ENCODE measurements at regions of chr11 and their contacts with region 1.

Region 1: GRCh38 chr11:6234387-6235107 is at the start of gene FHIP1B:
- DNase-seq: peak; percentile 95 to 100 (median 100)
- ATAC-seq: peak; percentile 95
- H3K4me3 ChIP-seq: peak within 1 kb of the TSS; percentile 96
- H3K4me3 Mint-ChIP-seq: peak within 1 kb of the TSS; percentile 90 to 100 (median 98)
- H3K27ac ChIP-seq: peak within 1 kb of the TSS; percentile 81
- H3K27ac Mint-ChIP-seq: peak within 1 kb of the TSS; percentile 87 to 100 (median 97)
- H3K4me1 ChIP-seq: peaks cover 14 to 19% of the 10 kb centered on the region in 2 donors
- H3K4me1 Mint-ChIP-seq: peaks cover 36 to 55% (median 50%) of the 10 kb centered on the region in 7 donors
- H3K27me3 ChIP-seq: no peaks in the 10 kb centered on the region
- H3K27me3 Mint-ChIP-seq: no peaks in the 10 kb centered on the region
- total RNA-seq, gene FHIP1B: 26.8 to 52.4 (median 44.3) TPM

Region 2: GRCh38 chr11:4393209-4393857 is 1841.2 kb before region 1 on chr11 and contains the start of gene TRIM21:
- CTCF ChIA-PET with region 1: no interaction called
- POLR2A ChIA-PET with region 1: no interaction called
- intact Hi-C with region 1: loop called (anchors 5 to 10 kb)
- DNase-seq: peak; percentile 62 to 92 (median 87)
- ATAC-seq: peak; percentile 100
- H3K4me3 ChIP-seq: peak within 1 kb of the TSS; percentile 87
- H3K4me3 Mint-ChIP-seq: peak within 1 kb of the TSS; percentile 88 to 94 (median 90)
- H3K27ac ChIP-seq: peak within 1 kb of the TSS; percentile 89
- H3K27ac Mint-ChIP-seq: peak within 1 kb of the TSS; percentile 68 to 96 (median 93)
- H3K4me1 ChIP-seq: peaks cover 8 to 14% of the 10 kb centered on the region in 2 donors
- H3K4me1 Mint-ChIP-seq: peaks cover 47 to 61% (median 58%) of the 10 kb centered on the region in 7 donors
- H3K27me3 ChIP-seq: no peaks in the 10 kb centered on the region
- H3K27me3 Mint-ChIP-seq: peaks cover 0 to 8% (median 5%) of the 10 kb centered on the region in 5 donors
- total RNA-seq, gene TRIM21: 17.5 to 78.9 (median 29.7) TPM

Region 3: GRCh38 chr11:6196396-6196795 is 38.2 kb before region 1 on chr11:
- CTCF ChIA-PET with region 1: no interaction called
- POLR2A ChIA-PET with region 1: no interaction called
- intact Hi-C with region 1: loop called in 1 of 2 experiments (anchors 1 kb)
- DNase-seq: no peak
- ATAC-seq: no peak
- H3K4me3 ChIP-seq: no peak overlapping the region
- H3K4me3 Mint-ChIP-seq: no peak overlapping the region
- H3K27ac ChIP-seq: no peak overlapping the region
- H3K27ac Mint-ChIP-seq: no peak overlapping the region
- H3K4me1 ChIP-seq: peaks cover 0 to 8% of the 10 kb centered on the region in 2 donors
- H3K4me1 Mint-ChIP-seq: peaks cover 0 to 18% (median 6%) of the 10 kb centered on the region in 7 donors
- H3K27me3 ChIP-seq: no peaks in the 10 kb centered on the region
- H3K27me3 Mint-ChIP-seq: peaks cover 0 to 8% (median 0%) of the 10 kb centered on the region in 5 donors

Region 4: GRCh38 chr11:6473481-6474422 is 239.2 kb after region 1 on chr11 and contains the start of gene TRIM3:
- CTCF ChIA-PET with region 1: no interaction called
- POLR2A ChIA-PET with region 1: no interaction called
- intact Hi-C with region 1: loop called in 1 of 2 experiments (anchors 2 kb)
- DNase-seq: peak; percentile 16 to 68 (median 44)
- ATAC-seq: peak; percentile 86
- H3K4me3 ChIP-seq: peak within 1 kb of the TSS; percentile 56
- H3K4me3 Mint-ChIP-seq: peak within 1 kb of the TSS; percentile 78 to 90 (median 86)
- H3K27ac ChIP-seq: peak within 1 kb of the TSS; percentile 71
- H3K27ac Mint-ChIP-seq: peak within 1 kb of the TSS; percentile 40 to 90 (median 88)
- H3K4me1 ChIP-seq: peaks cover 7 to 11% of the 10 kb centered on the region in 2 donors
- H3K4me1 Mint-ChIP-seq: peaks cover 12 to 31% (median 20%) of the 10 kb centered on the region in 7 donors
- H3K27me3 ChIP-seq: no peaks in the 10 kb centered on the region
- H3K27me3 Mint-ChIP-seq: peaks cover 0 to 10% (median 0%) of the 10 kb centered on the region in 5 donors
- total RNA-seq, gene TRIM3: 8.1 to 20.7 (median 17.2) TPM

Region 5: DNA sequence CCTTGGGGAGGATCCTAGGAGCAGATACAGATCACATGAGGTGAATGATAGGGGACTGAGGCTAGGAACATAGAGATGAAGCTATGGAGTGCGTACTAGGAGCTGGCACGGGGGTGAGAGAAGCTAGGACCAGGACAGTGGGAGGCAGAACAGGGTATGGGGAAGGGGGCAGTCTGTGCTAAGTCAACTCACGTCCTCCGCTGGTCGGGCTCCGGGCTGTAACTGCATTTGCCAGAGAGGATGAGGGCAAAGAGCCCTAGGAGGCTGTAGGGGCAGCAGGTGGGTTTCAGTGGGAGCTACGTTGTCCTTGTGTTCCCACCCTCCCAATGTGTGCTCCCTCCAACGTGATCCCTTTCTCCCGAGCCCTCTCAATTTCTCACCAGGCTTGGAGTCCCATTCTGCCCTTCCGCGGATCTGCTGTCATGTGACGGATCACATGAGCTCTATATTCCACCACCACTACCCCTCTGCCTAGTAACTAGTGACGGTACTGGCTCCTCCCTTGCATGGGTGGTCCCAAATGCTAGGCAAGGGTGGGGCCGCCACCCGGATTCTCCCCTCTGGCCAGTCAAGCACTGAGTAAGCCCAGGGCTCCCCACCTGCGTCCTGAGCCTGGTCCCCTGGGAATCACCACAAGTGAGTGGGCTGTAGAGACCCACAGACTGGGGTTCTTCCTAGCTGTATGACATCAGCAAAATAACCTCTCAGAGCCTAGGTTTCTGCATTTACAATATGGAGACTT is 384.6 kb after region 1 on chr11 and contains the start of gene TPP1:
- CTCF ChIA-PET with region 1: no interaction called
- POLR2A ChIA-PET with region 1: no interaction called
- intact Hi-C with region 1: loop called (anchors 1 to 2 kb)
- DNase-seq: peak; percentile 76 to 94 (median 90)
- ATAC-seq: peak; percentile 96
- H3K4me3 ChIP-seq: peak within 1 kb of the TSS; percentile 91
- H3K4me3 Mint-ChIP-seq: no peak within 1 kb of the TSS
- H3K27ac ChIP-seq: peak within 1 kb of the TSS; percentile 87
- H3K27ac Mint-ChIP-seq: no peak within 1 kb of the TSS
- H3K4me1 ChIP-seq: peaks cover 6 to 22% of the 10 kb centered on the region in 2 donors
- H3K4me1 Mint-ChIP-seq: peaks cover 7 to 17% (median 9%) of the 10 kb centered on the region in 7 donors
- H3K27me3 ChIP-seq: no peaks in the 10 kb centered on the region
- H3K27me3 Mint-ChIP-seq: no peaks in the 10 kb centered on the region
- total RNA-seq, gene TPP1: 49.9 to 160 (median 134) TPM

Region 6: DNA sequence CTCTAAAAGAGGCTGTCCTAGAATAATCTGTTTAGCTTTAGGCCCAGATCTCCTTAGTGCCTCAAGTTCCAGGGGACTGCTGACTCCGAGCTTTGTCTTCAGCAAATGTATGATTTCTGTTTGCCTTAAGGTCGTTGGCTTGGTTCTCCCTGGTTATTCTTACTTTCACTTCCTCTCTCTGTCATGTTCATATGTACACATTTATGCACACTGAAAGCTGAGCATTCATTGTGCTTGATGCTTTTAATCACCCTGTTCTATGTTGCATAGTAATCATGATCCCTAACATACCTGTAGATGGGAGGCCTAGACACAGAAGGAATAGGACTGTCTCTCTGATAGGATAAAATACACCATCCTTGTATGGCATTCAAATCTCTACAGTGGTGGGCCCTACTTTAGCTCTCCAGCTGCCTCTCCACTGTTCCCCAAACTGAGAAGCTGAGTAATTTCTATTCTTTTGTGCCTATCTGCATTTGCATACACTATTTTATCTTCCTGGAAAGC is 1286.5 kb after region 1 on chr11:
- CTCF ChIA-PET with region 1: no interaction called
- POLR2A ChIA-PET with region 1: no interaction called
- intact Hi-C with region 1: loop called (anchors 5 to 10 kb)
- DNase-seq: peak in 1 of 9 donors; percentile 12
- ATAC-seq: peak; percentile 75
- H3K4me3 ChIP-seq: peak overlapping the region; percentile 22
- H3K4me3 Mint-ChIP-seq: no peak overlapping the region
- H3K27ac ChIP-seq: peak overlapping the region; percentile 54
- H3K27ac Mint-ChIP-seq: no peak overlapping the region
- H3K4me1 ChIP-seq: peaks cover 4 to 64% of the 10 kb centered on the region in 2 donors
- H3K4me1 Mint-ChIP-seq: peaks cover 17 to 63% (median 37%) of the 10 kb centered on the region in 7 donors
- H3K27me3 ChIP-seq: no peaks in the 10 kb centered on the region
- H3K27me3 Mint-ChIP-seq: peaks cover 0 to 13% (median 0%) of the 10 kb centered on the region in 5 donors